ENCODE measurements at regions of chr2 and their contacts with region 1.

Region 1: GRCh38 chr2:43047190-43047780 is 179.1 kb downstream of the ZFP36L2 start:
- DNase-seq: peak; percentile 25
- ATAC-seq: no peak
- H3K4me3 Mint-ChIP-seq: no peak overlapping the region
- H3K27ac Mint-ChIP-seq: no peak overlapping the region
- H3K4me1 Mint-ChIP-seq: peaks cover 34% of the 10 kb centered on the region
- H3K27me3 Mint-ChIP-seq: no peaks in the 10 kb centered on the region
- CTCF ChIP-seq: no peak

Region 2: DNA sequence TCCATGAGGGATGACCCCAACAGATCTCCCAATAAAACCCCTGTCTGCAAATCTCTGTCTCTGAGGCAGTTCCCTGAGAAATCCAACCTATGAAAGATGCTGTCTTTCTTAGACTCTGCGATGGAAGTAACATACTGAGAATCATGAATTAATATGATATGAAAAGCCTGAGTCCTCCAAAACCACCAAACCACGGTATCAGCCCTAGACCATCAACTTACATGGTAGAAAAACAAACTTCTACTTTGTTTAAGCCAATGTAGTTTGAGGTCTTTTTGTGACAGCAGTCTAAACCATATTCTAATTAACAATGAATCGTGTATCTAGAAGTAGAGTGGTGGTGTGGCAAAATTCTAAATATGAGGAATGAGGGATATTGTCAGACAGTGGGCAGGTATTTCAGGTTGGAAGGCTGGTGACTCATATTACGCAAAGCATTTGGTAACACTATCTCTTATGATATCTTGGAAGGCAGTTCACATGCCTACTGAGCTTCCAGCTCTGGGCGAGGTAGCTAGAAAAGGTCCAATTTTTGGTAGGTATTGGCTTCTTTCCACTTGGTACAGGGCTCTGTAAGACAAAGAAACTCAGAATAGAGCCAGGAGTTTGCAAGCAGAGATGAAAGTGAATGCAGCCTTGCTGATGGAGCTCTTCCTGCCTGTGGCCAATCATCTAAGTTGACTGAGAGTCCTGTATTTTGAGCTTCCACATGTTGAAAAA is 36.7 kb before region 1 on chr2:
- CTCF ChIA-PET with region 1: no interaction called
- POLR2A ChIA-PET with region 1: no interaction called
- intact Hi-C with region 1: no loop called
- DNase-seq: no peak
- ATAC-seq: no peak
- H3K4me3 Mint-ChIP-seq: no peak overlapping the region
- H3K27ac Mint-ChIP-seq: no peak overlapping the region
- H3K4me1 Mint-ChIP-seq: peaks cover 3% of the 10 kb centered on the region
- H3K27me3 Mint-ChIP-seq: no peaks in the 10 kb centered on the region
- CTCF ChIP-seq: no peak

Region 3: GRCh38 chr2:43059183-43059897 is 12.1 kb after region 1 on chr2:
- CTCF ChIA-PET with region 1: no interaction called
- POLR2A ChIA-PET with region 1: interaction called, 10 read pairs
- intact Hi-C with region 1: no loop called
- DNase-seq: peak; percentile 89
- ATAC-seq: peak; percentile 95
- H3K4me3 Mint-ChIP-seq: no peak overlapping the region
- H3K27ac Mint-ChIP-seq: peak overlapping the region; percentile 79
- H3K4me1 Mint-ChIP-seq: peaks cover 30% of the 10 kb centered on the region
- H3K27me3 Mint-ChIP-seq: no peaks in the 10 kb centered on the region
- CTCF ChIP-seq: no peak

Measured in activated CD8-positive, alpha-beta T cell treated with anti-CD3 and anti-CD28 coated beads for 36 hours (primary cell).